T-cell (primary cell): ENCODE measurements at regions of chr12 and their contacts with region 1.

Region 1: DNA sequence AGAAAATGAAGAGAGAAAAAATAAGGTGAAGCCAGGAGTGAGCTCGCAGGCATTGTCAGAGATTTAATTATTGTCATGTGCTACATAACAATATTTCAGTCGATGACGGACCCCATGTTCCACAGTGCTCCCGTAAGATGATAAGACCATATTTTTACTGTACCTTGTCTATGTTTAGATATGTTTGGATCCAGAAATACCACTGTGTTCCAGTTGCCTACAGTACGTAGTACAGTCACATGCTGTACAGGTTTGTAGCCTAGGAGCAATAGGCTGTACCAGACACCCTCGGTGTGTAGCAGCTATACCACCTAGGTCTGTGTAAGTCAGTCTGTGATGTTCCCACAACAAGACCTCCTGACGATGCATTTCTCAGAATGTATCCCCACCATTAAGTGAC is 137.5 kb downstream of the FBXL14 start:
- DNase-seq: no peak
- ATAC-seq: no peak
- H3K4me3 ChIP-seq: no peak overlapping the region
- H3K4me3 Mint-ChIP-seq: no peak overlapping the region
- H3K27ac ChIP-seq: no peak overlapping the region
- H3K27ac Mint-ChIP-seq: no peak overlapping the region
- H3K4me1 ChIP-seq: no peaks in the 10 kb centered on the region
- H3K4me1 Mint-ChIP-seq: no peaks in the 10 kb centered on the region
- H3K27me3 ChIP-seq: no peaks in the 10 kb centered on the region
- H3K27me3 Mint-ChIP-seq: no peaks in the 10 kb centered on the region

Region 2: DNA sequence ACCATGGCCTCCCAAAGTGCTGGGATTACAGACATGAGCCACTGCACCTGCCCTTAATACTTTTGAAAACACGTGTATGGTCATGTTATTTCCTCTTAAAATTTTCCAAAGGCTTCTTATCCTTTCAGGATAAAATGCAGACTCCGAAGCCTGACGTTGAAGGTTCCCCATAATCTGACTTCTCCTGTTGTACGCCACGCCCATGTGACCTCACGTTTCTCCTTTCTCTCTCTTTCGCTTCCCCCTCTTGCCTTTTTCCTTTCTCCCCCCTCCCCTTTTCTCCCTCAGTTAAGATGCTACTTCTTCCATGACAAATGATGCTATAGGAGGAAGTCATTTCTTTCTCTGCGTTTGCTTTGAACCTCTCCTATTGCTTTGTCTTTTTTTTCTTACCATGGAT is 128.5 kb before region 1 on chr12:
- CTCF ChIA-PET with region 1: no interaction called
- POLR2A ChIA-PET with region 1: no interaction called
- DNase-seq: no peak
- ATAC-seq: no peak
- H3K4me3 ChIP-seq: no peak overlapping the region
- H3K4me3 Mint-ChIP-seq: no peak overlapping the region
- H3K27ac ChIP-seq: no peak overlapping the region
- H3K27ac Mint-ChIP-seq: no peak overlapping the region
- H3K4me1 ChIP-seq: no peaks in the 10 kb centered on the region
- H3K4me1 Mint-ChIP-seq: peaks cover 3 to 5% (median 3%) of the 10 kb centered on the region in 3 donors
- H3K27me3 ChIP-seq: no peaks in the 10 kb centered on the region
- H3K27me3 Mint-ChIP-seq: no peaks in the 10 kb centered on the region

Region 3: DNA sequence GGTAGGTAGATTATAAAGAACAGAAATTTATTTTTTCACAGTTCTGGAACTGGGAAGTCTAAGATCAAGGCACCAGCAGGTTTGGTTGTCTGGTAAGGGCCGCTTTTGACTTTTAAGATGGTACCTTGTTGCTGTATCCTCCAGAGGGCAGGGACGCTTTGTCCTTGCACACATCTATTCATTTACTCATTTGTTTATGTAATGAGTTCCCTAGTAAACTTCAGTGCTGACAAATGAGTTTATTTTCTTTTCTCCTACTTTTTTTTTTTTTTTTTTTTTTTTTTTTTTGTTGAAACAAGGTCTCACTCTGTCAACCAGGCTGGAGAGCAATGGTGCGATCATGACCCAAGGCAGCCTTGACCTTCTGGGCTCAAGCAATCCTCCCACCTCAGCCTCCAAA is 58.2 kb before region 1 on chr12:
- CTCF ChIA-PET with region 1: no interaction called
- POLR2A ChIA-PET with region 1: interaction called in 1 of 2 experiments, 13 read pairs
- DNase-seq: peak in 1 of 35 experiments; percentile 4
- ATAC-seq: no peak
- H3K4me3 ChIP-seq: no peak overlapping the region
- H3K4me3 Mint-ChIP-seq: no peak overlapping the region
- H3K27ac ChIP-seq: no peak overlapping the region
- H3K27ac Mint-ChIP-seq: no peak overlapping the region
- H3K4me1 ChIP-seq: no peaks in the 10 kb centered on the region
- H3K4me1 Mint-ChIP-seq: no peaks in the 10 kb centered on the region
- H3K27me3 ChIP-seq: no peaks in the 10 kb centered on the region
- H3K27me3 Mint-ChIP-seq: no peaks in the 10 kb centered on the region